BJ (cell line): ENCODE measurements at regions of chr1 and their contacts with region 1.

Region 1: GRCh38 chr1:185595835-185596667 is 138.1 kb upstream of the HMCN1 start:
- DNase-seq: no peak
- H3K4me3 ChIP-seq: no peak overlapping the region
- H3K27me3 ChIP-seq: no peaks in the 10 kb centered on the region
- CTCF ChIP-seq: peak; percentile 71

Region 2: DNA sequence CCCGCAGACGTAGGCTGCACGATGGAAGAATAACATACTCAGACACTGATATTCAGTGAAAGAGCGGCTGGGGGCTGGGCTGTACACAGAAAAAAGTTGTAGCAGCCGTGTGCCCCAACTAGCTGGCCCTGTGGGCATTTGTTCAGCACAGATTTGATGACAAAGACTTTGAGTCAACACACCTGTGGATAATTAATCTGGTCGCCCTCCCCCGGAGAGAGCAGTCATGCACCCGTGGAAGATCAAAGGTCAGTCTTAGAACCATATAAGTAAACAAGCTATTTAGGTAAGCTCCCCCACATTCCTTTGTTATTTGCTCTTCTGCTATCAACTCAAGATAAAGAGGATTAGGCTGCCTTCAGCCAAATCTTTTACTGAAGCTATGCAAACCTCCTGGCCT is 10.3 kb before region 1 on chr1:
- CTCF ChIA-PET with region 1: interaction called, 14 read pairs
- POLR2A ChIA-PET with region 1: no interaction called
- DNase-seq: no peak
- H3K4me3 ChIP-seq: no peak overlapping the region
- H3K27me3 ChIP-seq: no peaks in the 10 kb centered on the region
- CTCF ChIP-seq: no peak

Region 3: GRCh38 chr1:185608177-185608576 is 12.1 kb after region 1 on chr1:
- CTCF ChIA-PET with region 1: interaction called, 18 read pairs
- POLR2A ChIA-PET with region 1: no interaction called
- DNase-seq: no peak
- H3K4me3 ChIP-seq: no peak overlapping the region
- H3K27me3 ChIP-seq: no peaks in the 10 kb centered on the region
- CTCF ChIP-seq: no peak

Region 4: DNA sequence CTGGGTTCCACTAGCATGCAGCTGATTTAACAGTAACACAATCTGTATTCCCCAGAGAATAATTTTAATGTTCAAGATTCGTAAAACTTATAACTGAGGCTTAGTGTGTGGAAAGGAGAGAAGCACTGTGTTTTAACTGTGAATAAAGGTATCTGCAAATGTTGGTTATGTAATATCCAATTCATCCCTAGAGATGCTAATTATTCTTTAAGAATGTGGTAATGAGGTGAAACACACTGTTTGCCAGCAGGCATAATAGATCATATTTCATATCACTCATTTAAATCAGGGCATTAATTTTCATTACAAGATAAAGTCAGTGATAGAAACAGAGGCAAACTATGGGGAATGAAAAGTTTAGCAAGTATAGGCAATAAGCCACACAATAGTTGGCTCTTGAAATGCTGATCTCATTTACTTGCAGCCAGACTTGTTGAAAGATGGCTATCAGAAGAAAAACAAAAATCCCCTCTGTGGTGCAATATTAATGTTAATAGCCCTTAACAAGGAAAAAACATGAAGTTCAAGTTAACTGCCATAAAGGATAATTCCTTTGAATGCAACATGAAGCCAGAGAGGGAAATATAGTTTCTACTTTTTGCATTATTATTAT is 171.6 kb after region 1 on chr1:
- CTCF ChIA-PET with region 1: no interaction called
- POLR2A ChIA-PET with region 1: no interaction called
- DNase-seq: no peak
- H3K4me3 ChIP-seq: no peak overlapping the region
- H3K27me3 ChIP-seq: no peaks in the 10 kb centered on the region
- CTCF ChIP-seq: no peak